Lower leg skin (tissue), 4 donors: ENCODE measurements at regions of chr4 and their contacts with region 1.

Region 1: GRCh38 chr4:41882625-41883347 is 52.4 kb upstream of the TMEM33 start:
- DNase-seq: no peak
- H3K4me3 ChIP-seq: no peak overlapping the region
- CTCF ChIP-seq: no peak
- POLR2A ChIP-seq: no peak

Region 2: GRCh38 chr4:41692717-41693345 is 190.0 kb before region 1 on chr4:
- intact Hi-C with region 1: loop called (anchors 10 kb)
- DNase-seq: no peak
- H3K4me3 ChIP-seq: no peak overlapping the region
- CTCF ChIP-seq: no peak
- POLR2A ChIP-seq: no peak